IMR-90 (cell line): ENCODE measurements at regions of chr1 and their contacts with region 1.

Region 1: DNA sequence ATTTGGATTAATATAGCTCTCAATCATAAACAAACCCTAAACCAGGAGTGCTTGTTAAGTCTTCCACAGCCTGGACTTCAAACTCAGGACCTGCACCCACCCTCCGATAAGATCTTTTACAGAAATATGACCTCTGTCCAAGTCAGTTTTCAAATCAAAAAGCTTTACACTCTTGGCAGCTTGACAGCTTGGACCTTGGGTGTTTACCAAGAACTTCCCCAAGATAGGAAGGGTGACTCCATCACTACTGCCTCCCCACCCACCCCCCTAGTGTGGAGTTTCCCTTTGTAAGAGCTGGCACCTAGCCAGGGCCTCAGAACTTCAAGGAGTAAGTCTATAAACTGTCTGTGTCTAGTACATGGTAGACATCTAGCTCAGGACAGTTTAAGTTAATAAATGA is 9.6 kb downstream of the BCAR3 start:
- DNase-seq: peak; percentile 93
- ATAC-seq: peak; percentile 37; the same call in 1 of the 2 replicates
- H3K4me3 ChIP-seq: no peak overlapping the region
- H3K27ac ChIP-seq: 0 out of 2 replicates have a peak overlapping the region, but pooled peaks have one; percentile 45
- H3K4me1 ChIP-seq: peaks cover 47% of the 10 kb centered on the region
- H3K27me3 ChIP-seq: no peaks in the 10 kb centered on the region
- CTCF ChIP-seq: no peak
- POLR2A ChIP-seq: no peak
- RAD21 ChIP-seq: no peak

Region 2: GRCh38 chr1:93463960-93464359 is 208.1 kb before region 1 on chr1:
- CTCF ChIA-PET with region 1: no interaction called
- POLR2A ChIA-PET with region 1: no interaction called
- dilution Hi-C with region 1: no loop called
- in situ Hi-C with region 1: no loop called
- intact Hi-C with region 1: no loop called
- DNase-seq: peak; percentile 15
- ATAC-seq: peak; percentile 53; the same call in 1 of the 2 replicates
- H3K4me3 ChIP-seq: no peak overlapping the region
- H3K27ac ChIP-seq: no peak overlapping the region
- H3K4me1 ChIP-seq: no peaks in the 10 kb centered on the region; the same call in 1 of the 2 replicates
- H3K27me3 ChIP-seq: no peaks in the 10 kb centered on the region
- CTCF ChIP-seq: no peak
- POLR2A ChIP-seq: no peak
- RAD21 ChIP-seq: no peak

Region 3: GRCh38 chr1:93537924-93538323 is 134.1 kb before region 1 on chr1:
- CTCF ChIA-PET with region 1: no interaction called
- POLR2A ChIA-PET with region 1: no interaction called
- dilution Hi-C with region 1: no loop called
- in situ Hi-C with region 1: no loop called
- intact Hi-C with region 1: no loop called
- DNase-seq: peak; percentile 55
- ATAC-seq: peak; percentile 42
- H3K4me3 ChIP-seq: no peak overlapping the region
- H3K27ac ChIP-seq: no peak overlapping the region
- H3K4me1 ChIP-seq: no peaks in the 10 kb centered on the region
- H3K27me3 ChIP-seq: no peaks in the 10 kb centered on the region
- CTCF ChIP-seq: no peak
- POLR2A ChIP-seq: no peak
- RAD21 ChIP-seq: no peak

Region 4: GRCh38 chr1:93605812-93606512 is 66.1 kb before region 1 on chr1:
- CTCF ChIA-PET with region 1: no interaction called
- POLR2A ChIA-PET with region 1: no interaction called
- dilution Hi-C with region 1: no loop called
- in situ Hi-C with region 1: no loop called
- intact Hi-C with region 1: no loop called
- DNase-seq: peak; percentile 97
- ATAC-seq: peak; percentile 72
- H3K4me3 ChIP-seq: no peak overlapping the region
- H3K27ac ChIP-seq: no peak overlapping the region
- H3K4me1 ChIP-seq: peaks cover 28% of the 10 kb centered on the region
- H3K27me3 ChIP-seq: no peaks in the 10 kb centered on the region
- CTCF ChIP-seq: no peak
- POLR2A ChIP-seq: no peak
- RAD21 ChIP-seq: no peak

Region 5: DNA sequence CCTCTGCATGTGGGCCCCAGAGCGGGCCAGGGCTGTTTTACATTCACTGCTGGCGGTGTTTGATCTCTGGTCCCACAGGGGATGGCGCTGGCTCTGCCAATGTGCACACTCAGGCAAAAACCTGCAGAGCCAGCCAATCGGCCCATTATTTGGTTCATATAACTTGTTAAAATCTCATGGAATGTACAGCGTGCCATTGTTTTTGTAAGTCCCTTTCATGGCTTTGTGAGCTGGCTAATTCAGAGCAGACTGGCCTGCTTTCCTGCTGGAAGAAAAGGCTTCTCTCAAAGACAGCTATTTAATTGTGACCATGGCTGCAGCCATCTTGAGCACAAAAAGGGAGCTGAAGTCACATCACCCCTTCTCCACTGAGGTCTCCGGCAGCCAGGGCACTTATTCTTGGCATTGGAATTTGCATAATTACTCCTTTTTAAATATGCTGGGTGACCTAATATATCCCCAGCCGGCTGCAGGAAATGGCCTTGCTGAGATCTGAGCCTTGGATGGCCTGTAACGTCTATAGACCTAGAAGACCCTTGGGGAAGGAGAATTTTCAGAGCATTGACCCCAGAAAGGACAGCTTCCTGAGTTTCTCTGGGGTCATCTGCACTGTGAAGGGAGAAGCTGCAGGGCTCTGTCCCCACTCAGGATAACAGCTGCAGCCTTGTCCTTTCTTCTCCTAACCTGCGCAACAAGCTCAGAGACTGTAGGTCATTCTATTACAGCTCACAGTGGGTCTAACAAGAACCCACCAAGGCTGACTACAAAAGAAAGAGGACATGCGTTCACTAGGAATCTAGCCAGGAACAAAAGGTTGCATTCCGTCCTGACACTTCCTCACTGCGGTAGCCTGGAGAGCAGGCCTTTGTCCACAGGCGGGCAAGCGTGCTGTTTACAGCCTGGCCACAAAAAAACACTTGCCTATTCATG is 36.2 kb before region 1 on chr1:
- CTCF ChIA-PET with region 1: no interaction called
- POLR2A ChIA-PET with region 1: no interaction called
- dilution Hi-C with region 1: no loop called
- in situ Hi-C with region 1: loop called (anchors 5 kb)
- intact Hi-C with region 1: no loop called
- DNase-seq: no peak
- ATAC-seq: no peak
- H3K4me3 ChIP-seq: no peak overlapping the region
- H3K27ac ChIP-seq: no peak overlapping the region
- H3K4me1 ChIP-seq: peaks cover 2% of the 10 kb centered on the region
- H3K27me3 ChIP-seq: no peaks in the 10 kb centered on the region
- CTCF ChIP-seq: no peak
- POLR2A ChIP-seq: no peak
- RAD21 ChIP-seq: no peak